Activated naive CD4-positive, alpha-beta T cell treated with anti-CD3 and anti-CD28 coated beads for 36 hours (primary cell): ENCODE measurements at regions of chr2 and their contacts with region 1.

Region 1: GRCh38 chr2:130981667-130982066 is 111.6 kb downstream of the FAM168B start:
- DNase-seq: no peak
- H3K4me3 Mint-ChIP-seq: no peak overlapping the region
- H3K27ac Mint-ChIP-seq: no peak overlapping the region
- H3K4me1 Mint-ChIP-seq: no peaks in the 10 kb centered on the region
- H3K27me3 Mint-ChIP-seq: no peaks in the 10 kb centered on the region

Region 2: DNA sequence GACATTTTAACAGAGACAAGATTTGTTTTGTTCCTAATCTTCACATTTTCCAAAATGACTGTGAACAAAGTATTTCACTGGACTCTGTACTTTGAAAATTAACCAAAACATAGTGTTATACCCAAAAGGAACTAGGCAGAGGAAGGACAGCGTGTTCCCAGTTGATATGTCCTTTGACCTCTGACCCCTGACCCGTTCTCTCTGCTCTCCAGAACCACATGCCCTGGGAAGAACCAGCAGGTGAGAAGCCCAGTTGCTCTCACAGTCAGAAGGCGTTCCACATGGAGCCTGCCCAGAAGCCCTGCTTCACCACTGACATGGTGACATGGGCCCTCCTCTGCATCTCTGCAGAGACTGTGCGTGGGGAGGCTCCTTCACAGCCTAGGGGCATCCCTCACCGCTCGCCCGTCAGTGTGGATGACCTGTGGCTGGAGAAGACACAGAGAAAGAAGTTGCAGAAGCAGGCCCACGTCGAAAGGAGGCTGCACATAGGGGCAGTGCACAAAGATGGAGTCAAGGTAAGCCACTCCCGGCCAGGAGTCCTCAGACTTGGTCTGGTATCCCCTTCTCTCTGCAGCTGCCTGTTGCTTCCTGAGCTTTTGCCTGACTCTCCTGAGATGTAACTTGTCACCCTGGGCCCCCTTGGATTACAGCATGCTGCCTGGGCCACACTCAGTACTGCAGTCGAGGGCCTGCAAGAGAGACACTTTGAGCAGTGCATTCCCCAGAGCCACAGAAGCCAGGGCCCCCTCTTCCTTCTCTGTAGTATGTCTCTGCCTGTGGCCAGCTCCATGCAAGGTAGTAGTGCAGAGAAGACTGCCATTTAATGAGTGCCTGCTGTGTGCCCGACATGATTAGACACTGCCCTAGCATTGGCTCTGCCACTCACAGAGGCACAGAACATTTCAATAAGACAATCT is 50.7 kb before region 1 on chr2:
- CTCF ChIA-PET with region 1: no interaction called
- intact Hi-C with region 1: no loop called
- DNase-seq: no peak
- H3K4me3 Mint-ChIP-seq: no peak overlapping the region
- H3K27ac Mint-ChIP-seq: no peak overlapping the region
- H3K4me1 Mint-ChIP-seq: no peaks in the 10 kb centered on the region
- H3K27me3 Mint-ChIP-seq: peaks cover 15% of the 10 kb centered on the region

Region 3: GRCh38 chr2:130963849-130964793 is 17.5 kb before region 1 on chr2:
- CTCF ChIA-PET with region 1: no interaction called
- intact Hi-C with region 1: loop called (anchors 2 kb)
- DNase-seq: peak; percentile 27
- H3K4me3 Mint-ChIP-seq: peak overlapping the region; percentile 11
- H3K27ac Mint-ChIP-seq: no peak overlapping the region
- H3K4me1 Mint-ChIP-seq: peaks cover 7% of the 10 kb centered on the region
- H3K27me3 Mint-ChIP-seq: peaks cover 49% of the 10 kb centered on the region

Region 4: GRCh38 chr2:131093006-131093695 is 111.5 kb after region 1 on chr2 and contains the start of gene FAM168B:
- CTCF ChIA-PET with region 1: no interaction called
- intact Hi-C with region 1: no loop called
- DNase-seq: peak; percentile 86
- H3K4me3 Mint-ChIP-seq: peak within 1 kb of the TSS; percentile 85
- H3K27ac Mint-ChIP-seq: peak within 1 kb of the TSS; percentile 92
- H3K4me1 Mint-ChIP-seq: peaks cover 20% of the 10 kb centered on the region
- H3K27me3 Mint-ChIP-seq: no peaks in the 10 kb centered on the region
- total RNA-seq, gene FAM168B: 52.7 to 55.0 TPM